Prostate gland (tissue), 2 donors: ENCODE measurements at regions of chr1 and their contacts with region 1.

Region 1: DNA sequence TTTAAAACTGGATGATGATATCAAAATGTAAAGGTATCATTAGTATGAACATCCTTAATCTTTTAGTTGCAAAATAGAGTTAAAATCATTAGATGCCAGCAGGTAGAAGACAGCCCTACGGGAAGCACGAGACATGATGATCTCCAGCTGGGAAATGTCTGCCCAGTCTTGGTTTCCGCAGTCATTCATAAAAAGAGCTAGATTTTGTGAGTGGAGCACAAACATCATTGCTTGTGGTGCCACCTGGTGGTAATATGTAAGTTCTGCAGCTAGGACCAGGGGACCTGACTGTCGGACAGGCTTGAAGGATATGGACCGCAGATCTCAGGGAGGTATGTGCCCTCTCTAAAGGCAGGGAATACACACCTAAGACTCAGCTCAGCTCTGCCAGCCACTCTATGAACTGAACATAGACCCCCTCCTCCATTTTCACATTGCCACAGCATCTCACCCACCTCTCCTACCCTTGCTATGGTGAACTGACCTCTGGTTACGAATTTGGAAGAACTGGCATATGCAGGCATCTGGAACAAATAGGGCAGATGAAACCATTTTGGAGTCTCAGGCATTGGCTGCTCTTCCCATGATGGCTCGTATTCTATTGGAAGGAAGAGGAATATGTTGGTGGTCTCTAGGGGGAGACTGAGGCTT is 9.2 kb downstream of the FCMR start:
- DNase-seq: peak; percentile 78
- H3K4me3 ChIP-seq: no peak overlapping the region
- H3K27ac ChIP-seq: no peak overlapping the region
- H3K4me1 ChIP-seq: no peaks in the 10 kb centered on the region
- H3K27me3 ChIP-seq: no peaks in the 10 kb centered on the region
- CTCF ChIP-seq: peak; percentile 85 to 92 (median 90)
- POLR2A ChIP-seq: no peak

Region 2: GRCh38 chr1:206734499-206735142 is 177.9 kb before region 1 on chr1:
- intact Hi-C with region 1: loop called (anchors 2 kb)
- DNase-seq: no peak
- H3K4me3 ChIP-seq: no peak overlapping the region
- H3K27ac ChIP-seq: no peak overlapping the region
- H3K4me1 ChIP-seq: no peaks in the 10 kb centered on the region
- H3K27me3 ChIP-seq: no peaks in the 10 kb centered on the region
- CTCF ChIP-seq: peak; percentile 23 to 77 (median 57)
- POLR2A ChIP-seq: no peak

Region 3: GRCh38 chr1:206865013-206865671 is 47.4 kb before region 1 on chr1 and contains the start of gene IL20:
- intact Hi-C with region 1: loop called (anchors 2 kb)
- DNase-seq: peak; percentile 91
- H3K4me3 ChIP-seq: no peak within 1 kb of the TSS
- H3K27ac ChIP-seq: no peak within 1 kb of the TSS
- H3K4me1 ChIP-seq: no peaks in the 10 kb centered on the region
- H3K27me3 ChIP-seq: no peaks in the 10 kb centered on the region
- CTCF ChIP-seq: peak; percentile 66 to 89 (median 84)
- POLR2A ChIP-seq: no peak
- total RNA-seq, gene IL20: not detected